AG04450 (cell line): ENCODE measurements at regions of chr1 and their contacts with region 1.

Region 1: GRCh38 chr1:211017075-211017748 is 116.7 kb downstream of the KCNH1 start:
- DNase-seq: no peak
- H3K4me3 ChIP-seq: no peak overlapping the region
- H3K27ac ChIP-seq: no peak overlapping the region
- H3K27me3 ChIP-seq: no peaks in the 10 kb centered on the region
- CTCF ChIP-seq: no peak

Region 2: DNA sequence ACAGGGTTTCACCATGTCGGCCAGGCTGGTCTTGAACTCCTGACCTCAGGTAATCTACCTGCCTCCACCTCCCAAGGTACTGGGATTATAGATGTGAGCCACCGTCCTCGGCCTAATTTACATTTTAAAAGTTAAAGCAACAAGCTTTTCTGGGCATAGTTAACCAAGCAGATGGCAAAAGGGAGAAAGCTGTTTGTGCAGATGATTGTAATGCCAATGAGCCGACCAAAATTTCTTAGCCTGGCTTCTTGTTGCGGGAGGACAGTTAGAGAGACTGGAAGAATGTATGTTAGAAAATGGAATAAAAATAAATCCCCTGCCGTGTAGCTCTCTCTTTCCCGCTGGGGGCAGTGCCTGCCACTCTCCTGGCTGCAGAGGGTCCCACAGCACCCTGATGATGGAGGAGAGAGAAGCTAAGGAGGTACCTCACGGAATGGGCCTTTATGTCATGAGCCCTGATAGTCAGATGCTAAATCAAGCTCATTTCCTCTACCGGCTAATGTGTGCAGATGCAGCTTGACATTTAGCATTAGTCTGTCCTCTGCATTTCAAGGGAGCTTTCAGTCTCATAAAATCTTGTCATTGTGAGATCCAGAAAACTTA is 601.3 kb before region 1 on chr1:
- CTCF ChIA-PET with region 1: no interaction called
- POLR2A ChIA-PET with region 1: interaction called, 10 read pairs
- DNase-seq: no peak
- H3K4me3 ChIP-seq: no peak overlapping the region
- H3K27ac ChIP-seq: no peak overlapping the region
- H3K27me3 ChIP-seq: no peaks in the 10 kb centered on the region
- CTCF ChIP-seq: peak; percentile 27